ENCODE measurements at regions of chr9 and their contacts with region 1.

Region 1: DNA sequence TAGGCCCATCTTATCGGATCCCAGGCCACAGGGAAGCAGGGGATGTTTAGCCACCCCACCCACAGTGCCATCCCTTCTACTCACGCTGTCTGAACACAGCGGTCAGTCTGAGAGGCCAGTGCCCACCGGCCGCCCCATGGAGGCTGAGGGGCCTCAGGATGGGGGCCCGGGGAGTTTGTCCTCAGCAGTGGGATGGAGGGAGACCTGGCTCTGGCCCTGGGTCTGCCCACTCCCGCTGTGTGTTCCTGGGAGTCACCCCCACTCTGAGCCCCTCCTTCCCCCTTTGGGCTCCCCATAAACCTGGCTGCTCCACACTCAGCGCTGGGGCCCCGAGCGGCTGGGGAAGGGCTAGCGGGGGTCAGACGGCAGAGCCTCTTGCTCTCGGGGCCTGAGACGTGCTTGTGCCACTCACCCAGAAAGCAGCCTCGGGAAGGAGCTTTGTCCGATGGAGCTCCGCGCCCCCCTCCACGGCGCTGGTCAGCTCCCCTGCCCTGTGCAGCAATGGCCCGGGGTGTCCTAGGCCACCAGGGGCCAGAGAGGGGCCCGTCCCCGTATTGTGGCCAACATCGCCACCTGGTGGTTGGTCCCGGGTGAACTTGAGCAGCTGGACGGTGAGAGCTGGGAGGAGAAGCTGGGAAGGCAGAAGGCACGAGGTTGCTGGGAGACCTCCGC is 10.9 kb upstream of the LAMC3 start:
- DNase-seq: peak; percentile 75 to 95
- ATAC-seq: peak; percentile 84 to 96
- H3K4me3 ChIP-seq: no peak overlapping the region
- H3K27ac ChIP-seq: peak overlapping the region; percentile 35 to 46; a peak in 2 of 6 replicates
- H3K4me1 ChIP-seq: peaks cover 26% of the 10 kb centered on the region
- CTCF ChIP-seq: peak; percentile 83
- EP300 ChIP-seq: no peak
- POLR2A ChIP-seq: no peak
- RAD21 ChIP-seq: peak; percentile 94

Region 2: DNA sequence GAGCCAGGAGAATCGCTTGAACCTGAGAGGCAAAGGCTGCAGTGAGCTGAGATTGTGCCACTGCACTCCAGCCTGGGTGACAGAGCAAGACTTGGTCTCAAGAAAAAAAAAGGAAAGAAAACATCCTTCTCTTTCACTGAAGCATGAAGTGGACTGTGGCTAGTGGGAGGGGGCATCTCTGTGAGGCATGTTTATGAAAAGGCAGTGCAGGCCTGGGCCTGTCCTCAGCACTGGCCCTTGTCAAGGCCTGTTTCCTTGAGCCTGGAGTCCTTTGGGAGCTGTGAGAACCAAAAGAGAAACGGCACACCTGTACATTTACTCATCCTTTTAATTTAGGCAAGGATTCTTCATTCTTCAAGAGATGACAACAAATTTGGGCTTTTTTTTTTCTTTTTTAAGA is 437.0 kb before region 1 on chr9:
- CTCF ChIA-PET with region 1: no interaction called
- POLR2A ChIA-PET with region 1: no interaction called
- DNase-seq: no peak
- ATAC-seq: no peak
- H3K4me3 ChIP-seq: no peak overlapping the region
- H3K27ac ChIP-seq: no peak overlapping the region
- H3K4me1 ChIP-seq: peaks cover 4% of the 10 kb centered on the region; the same call in 2 of the 3 replicates
- CTCF ChIP-seq: no peak
- EP300 ChIP-seq: no peak
- POLR2A ChIP-seq: no peak
- RAD21 ChIP-seq: no peak

Region 3: DNA sequence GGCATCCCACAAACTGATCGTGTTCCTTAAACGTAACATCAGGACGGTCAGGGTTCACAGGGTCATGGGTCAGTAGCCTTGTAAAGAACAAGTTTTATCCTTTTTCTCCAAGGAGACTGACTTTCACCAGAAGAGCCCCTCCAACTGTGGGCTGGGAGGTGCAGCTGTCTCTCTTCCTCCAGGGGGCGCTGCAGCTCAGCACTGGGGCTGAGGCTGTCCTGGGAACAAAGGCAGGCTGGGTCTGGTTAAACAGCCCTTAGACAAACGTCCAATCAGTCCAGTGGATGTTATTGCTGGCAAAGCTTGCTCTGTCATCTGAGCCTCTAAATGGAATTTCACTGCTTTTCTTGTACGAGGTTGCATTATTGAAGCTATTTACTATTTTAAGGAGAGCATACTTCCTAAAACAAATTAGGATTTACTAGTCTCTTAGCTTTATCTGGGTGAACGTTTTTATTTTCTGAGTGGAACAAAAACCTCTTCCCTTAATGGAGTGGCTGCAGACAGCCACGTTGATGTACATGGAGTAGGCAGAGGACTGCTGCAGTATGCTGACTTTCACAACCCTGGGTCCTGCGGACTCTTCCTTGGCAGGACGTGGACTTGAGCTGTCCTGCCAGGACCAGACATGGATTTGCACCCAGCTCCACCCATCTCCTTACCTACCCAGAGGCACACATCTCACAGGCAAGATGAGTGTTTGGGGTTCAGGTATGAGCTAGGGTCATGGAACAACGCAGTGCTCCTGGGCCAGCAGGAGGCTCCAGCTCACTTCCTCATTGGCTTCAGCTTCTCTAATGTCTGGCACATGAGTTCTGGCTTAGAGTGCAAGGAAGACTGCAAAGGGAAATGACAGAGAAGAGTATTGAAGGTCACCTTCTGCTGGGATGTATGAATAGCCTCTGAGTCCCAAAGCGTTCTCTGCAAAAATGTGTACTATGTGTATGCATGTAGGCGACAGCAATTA is 296.7 kb before region 1 on chr9:
- CTCF ChIA-PET with region 1: interaction called, 28 read pairs
- POLR2A ChIA-PET with region 1: no interaction called
- DNase-seq: peak; percentile 71 to 74
- ATAC-seq: peak; percentile 94 to 98
- H3K4me3 ChIP-seq: no peak overlapping the region
- H3K27ac ChIP-seq: no peak overlapping the region
- H3K4me1 ChIP-seq: no peaks in the 10 kb centered on the region
- CTCF ChIP-seq: peak; percentile 87
- EP300 ChIP-seq: no peak
- POLR2A ChIP-seq: no peak
- RAD21 ChIP-seq: peak; percentile 50 to 57; a peak in 4 of 5 replicates

Region 4: GRCh38 chr9:130884980-130885696 is 112.9 kb before region 1 on chr9:
- CTCF ChIA-PET with region 1: interaction called, 97 read pairs
- POLR2A ChIA-PET with region 1: no interaction called
- DNase-seq: no peak
- ATAC-seq: no peak
- H3K4me3 ChIP-seq: no peak overlapping the region
- H3K27ac ChIP-seq: peak overlapping the region in 1 of 2 experiments; percentile 75; a peak in 3 of 6 replicates
- H3K4me1 ChIP-seq: no peaks in the 10 kb centered on the region
- CTCF ChIP-seq: no peak
- EP300 ChIP-seq: no peak
- POLR2A ChIP-seq: no peak
- RAD21 ChIP-seq: no peak

Region 5: DNA sequence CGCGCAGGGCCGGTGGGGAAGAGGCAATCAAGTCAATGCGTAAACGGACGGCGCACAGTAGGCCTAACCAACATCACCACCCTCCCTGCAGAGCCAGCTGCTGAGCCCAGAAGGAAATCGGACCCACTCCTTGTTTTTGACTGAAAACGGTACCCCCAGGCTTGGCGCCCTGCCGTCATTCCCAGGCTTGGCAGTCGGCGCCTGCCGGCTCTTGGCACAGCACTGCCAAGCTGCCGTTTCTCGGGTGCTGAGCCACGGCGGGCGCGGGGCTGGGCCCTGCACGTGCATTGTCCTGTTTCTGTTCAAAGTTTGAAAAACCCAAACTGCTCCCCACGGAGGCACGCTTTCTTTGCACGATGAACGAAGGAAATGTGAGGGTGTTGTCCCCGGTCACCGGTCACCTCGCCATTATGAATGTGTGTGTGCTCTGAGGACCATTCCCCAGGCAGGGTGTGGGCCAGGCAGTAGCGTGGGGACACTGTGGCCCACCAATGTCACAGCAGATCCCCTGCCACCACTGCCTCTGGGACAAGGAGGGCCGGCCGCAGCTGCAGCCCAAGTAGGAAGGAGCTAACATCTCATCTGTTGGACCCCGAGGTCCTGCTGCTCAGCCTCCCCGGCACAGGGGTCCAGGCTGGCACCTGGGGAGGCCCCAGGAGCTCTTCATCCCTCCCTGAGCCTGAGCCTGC is 79.0 kb before region 1 on chr9:
- CTCF ChIA-PET with region 1: interaction called, 22 read pairs
- POLR2A ChIA-PET with region 1: no interaction called
- DNase-seq: no peak
- ATAC-seq: no peak
- H3K4me3 ChIP-seq: no peak overlapping the region
- H3K27ac ChIP-seq: no peak overlapping the region
- H3K4me1 ChIP-seq: no peaks in the 10 kb centered on the region
- CTCF ChIP-seq: no peak
- EP300 ChIP-seq: no peak
- POLR2A ChIP-seq: no peak
- RAD21 ChIP-seq: no peak

Region 6: GRCh38 chr9:130956636-130957450 is 41.2 kb before region 1 on chr9:
- CTCF ChIA-PET with region 1: interaction called, 28 read pairs
- POLR2A ChIA-PET with region 1: no interaction called
- DNase-seq: no peak
- ATAC-seq: no peak
- H3K4me3 ChIP-seq: no peak overlapping the region
- H3K27ac ChIP-seq: no peak overlapping the region
- H3K4me1 ChIP-seq: peaks cover 2% of the 10 kb centered on the region
- CTCF ChIP-seq: no peak
- EP300 ChIP-seq: no peak
- POLR2A ChIP-seq: no peak
- RAD21 ChIP-seq: no peak

Region 7: DNA sequence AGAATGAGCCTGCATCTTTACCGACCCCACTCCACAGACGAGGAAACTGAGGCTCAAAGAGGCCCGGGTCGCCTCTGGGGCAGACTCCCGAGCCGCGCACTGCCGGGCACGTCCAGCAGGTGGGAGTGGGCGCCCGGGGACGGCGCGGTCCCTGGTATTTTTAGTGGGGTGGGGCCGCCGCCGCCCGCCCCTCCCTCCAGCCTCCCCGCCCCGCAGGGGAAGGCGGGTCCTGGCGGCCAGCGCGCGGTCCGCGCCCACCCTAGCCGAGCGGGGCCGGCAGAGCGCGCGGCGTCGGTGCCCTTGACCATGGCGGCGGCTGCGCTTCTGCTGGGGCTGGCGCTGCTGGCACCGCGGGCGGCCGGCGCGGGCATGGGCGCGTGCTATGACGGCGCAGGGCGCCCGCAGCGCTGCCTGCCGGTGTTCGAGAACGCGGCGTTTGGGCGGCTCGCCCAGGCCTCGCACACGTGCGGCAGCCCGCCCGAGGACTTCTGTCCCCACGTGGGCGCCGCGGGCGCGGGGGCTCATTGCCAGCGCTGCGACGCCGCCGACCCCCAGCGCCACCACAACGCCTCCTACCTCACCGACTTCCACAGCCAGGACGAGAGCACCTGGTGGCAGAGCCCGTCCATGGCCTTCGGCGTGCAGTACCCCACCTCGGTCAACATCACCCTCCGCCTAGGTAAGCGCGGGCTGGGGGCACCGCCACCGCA is 11.0 kb after region 1 on chr9 and contains the start of gene LAMC3:
- CTCF ChIA-PET with region 1: interaction called, 70 read pairs
- POLR2A ChIA-PET with region 1: no interaction called
- DNase-seq: peak; percentile 52 to 65
- ATAC-seq: peak; percentile 82 to 87
- H3K4me3 ChIP-seq: peak within 1 kb of the TSS; percentile 54
- H3K27ac ChIP-seq: peak within 1 kb of the TSS; percentile 56 to 82; a peak in 5 of 6 replicates
- H3K4me1 ChIP-seq: peaks cover 4% of the 10 kb centered on the region; the same call in 1 of the 3 replicates
- CTCF ChIP-seq: peak; percentile 50
- EP300 ChIP-seq: no peak
- POLR2A ChIP-seq: no peak
- RAD21 ChIP-seq: peak; percentile 44 to 69; a peak in 4 of 5 replicates
- polyA plus RNA-seq, gene LAMC3: 1.0 TPM in 2 replicates